ENCODE measurements at regions of chr14 and their contacts with region 1.

Region 1: GRCh38 chr14:56023531-56024135 is 94.6 kb upstream of the PELI2 start:
- DNase-seq: no peak

Region 2: DNA sequence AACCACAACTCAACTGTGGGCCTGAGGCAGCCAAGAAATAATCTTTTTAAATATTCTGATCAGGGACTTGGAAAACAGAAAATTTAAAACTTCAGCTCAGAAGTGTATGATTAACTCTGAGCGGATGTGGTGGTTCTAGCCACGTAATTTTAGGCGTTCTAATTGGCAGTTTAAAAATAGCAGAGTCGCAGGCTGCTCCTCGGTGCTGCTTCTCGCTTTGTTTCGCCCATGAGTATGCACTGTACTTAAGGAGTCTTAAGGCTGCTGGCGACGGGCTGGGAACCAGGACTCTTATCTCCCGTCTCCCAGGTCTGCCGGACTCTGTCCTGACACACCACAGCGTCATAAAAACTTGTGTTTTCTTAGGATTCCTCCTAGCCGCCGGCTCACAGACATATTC is 18.8 kb before region 1 on chr14:
- intact Hi-C with region 1: loop called in 1 of 2 experiments (anchors 2 kb)
- DNase-seq: no peak

Region 3: GRCh38 chr14:56059054-56059453 is 35.4 kb after region 1 on chr14:
- intact Hi-C with region 1: no loop called
- DNase-seq: no peak

Measured in posterior vena cava (tissue), 2 donors.